ENCODE measurements at regions of chr9 and their contacts with region 1.

Region 1: GRCh38 chr9:113556877-113557593 is 93.5 kb downstream of the RGS3 start:
- DNase-seq: no peak
- H3K4me3 Mint-ChIP-seq: no peak overlapping the region
- H3K27ac Mint-ChIP-seq: peak overlapping the region; percentile 78
- H3K4me1 Mint-ChIP-seq: peaks cover 36% of the 10 kb centered on the region
- H3K27me3 Mint-ChIP-seq: no peaks in the 10 kb centered on the region

Region 2: DNA sequence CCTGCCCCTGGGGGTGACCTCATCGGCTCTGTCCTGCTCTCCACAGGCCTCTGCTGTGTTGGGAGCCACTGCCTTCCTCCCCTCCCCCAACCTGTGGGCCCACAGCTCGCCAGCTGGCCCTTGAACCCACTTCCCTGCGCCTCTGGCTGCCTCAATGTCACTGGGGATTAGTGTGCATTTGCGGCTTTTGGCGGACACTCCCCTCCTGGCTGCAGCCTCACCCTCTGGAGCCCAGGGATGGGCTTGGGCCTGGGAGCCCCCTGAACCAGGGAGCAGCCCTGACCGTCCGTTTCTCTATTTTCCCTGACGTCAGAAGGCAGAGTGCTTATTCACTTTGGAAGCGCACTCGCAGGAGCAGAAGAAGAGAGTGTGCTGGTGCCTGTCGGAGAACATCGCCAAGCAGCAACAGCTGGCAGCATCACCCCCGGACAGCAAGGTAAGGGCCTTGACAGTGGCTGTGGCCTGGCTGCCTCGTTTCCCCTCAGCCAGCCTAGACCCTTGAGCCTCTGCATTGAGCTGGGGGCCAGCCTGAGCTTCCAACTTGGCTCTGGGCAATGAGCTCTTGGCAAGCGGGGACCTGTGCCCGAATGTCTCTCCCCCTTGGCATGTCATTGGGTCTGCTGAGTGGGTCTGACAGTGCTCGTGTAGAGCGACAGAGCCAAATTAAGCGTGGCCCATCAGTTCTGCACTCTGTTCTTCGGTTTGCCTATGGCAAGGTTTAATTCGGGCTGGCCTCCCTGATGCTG is 20.4 kb before region 1 on chr9:
- intact Hi-C with region 1: no loop called
- DNase-seq: no peak
- H3K4me3 Mint-ChIP-seq: no peak overlapping the region
- H3K27ac Mint-ChIP-seq: no peak overlapping the region
- H3K4me1 Mint-ChIP-seq: peaks cover 6% of the 10 kb centered on the region
- H3K27me3 Mint-ChIP-seq: no peaks in the 10 kb centered on the region

Region 3: GRCh38 chr9:113622600-113623400 is 65.8 kb after region 1 on chr9:
- intact Hi-C with region 1: loop called (anchors 2 kb)
- DNase-seq: peak; percentile 78
- H3K4me3 Mint-ChIP-seq: peak overlapping the region; percentile 52
- H3K27ac Mint-ChIP-seq: peak overlapping the region; percentile 96
- H3K4me1 Mint-ChIP-seq: peaks cover 44% of the 10 kb centered on the region
- H3K27me3 Mint-ChIP-seq: no peaks in the 10 kb centered on the region

Measured in activated CD4-positive, alpha-beta T cell treated with anti-CD3 and anti-CD28 coated beads, Interleukin-2, amount 10 ng/mL, durations not matched to agents 24 days and 14 days (primary cell).